MCF 10A (cell line): ENCODE measurements at regions of chr6 and their contacts with region 1.

Region 1: GRCh38 chr6:28252009-28252975 is at the start of gene ZKSCAN4:
- DNase-seq: peak; percentile 91
- H3K4me3 Mint-ChIP-seq: peak within 1 kb of the TSS; percentile 93
- H3K27ac Mint-ChIP-seq: peak within 1 kb of the TSS; percentile 83
- H3K4me1 Mint-ChIP-seq: peaks cover 7% of the 10 kb centered on the region
- H3K27me3 Mint-ChIP-seq: no peaks in the 10 kb centered on the region
- CTCF ChIP-seq: no peak
- total RNA-seq, gene ZKSCAN4: 3.3 and 4.8 TPM in 2 replicates

Region 2: DNA sequence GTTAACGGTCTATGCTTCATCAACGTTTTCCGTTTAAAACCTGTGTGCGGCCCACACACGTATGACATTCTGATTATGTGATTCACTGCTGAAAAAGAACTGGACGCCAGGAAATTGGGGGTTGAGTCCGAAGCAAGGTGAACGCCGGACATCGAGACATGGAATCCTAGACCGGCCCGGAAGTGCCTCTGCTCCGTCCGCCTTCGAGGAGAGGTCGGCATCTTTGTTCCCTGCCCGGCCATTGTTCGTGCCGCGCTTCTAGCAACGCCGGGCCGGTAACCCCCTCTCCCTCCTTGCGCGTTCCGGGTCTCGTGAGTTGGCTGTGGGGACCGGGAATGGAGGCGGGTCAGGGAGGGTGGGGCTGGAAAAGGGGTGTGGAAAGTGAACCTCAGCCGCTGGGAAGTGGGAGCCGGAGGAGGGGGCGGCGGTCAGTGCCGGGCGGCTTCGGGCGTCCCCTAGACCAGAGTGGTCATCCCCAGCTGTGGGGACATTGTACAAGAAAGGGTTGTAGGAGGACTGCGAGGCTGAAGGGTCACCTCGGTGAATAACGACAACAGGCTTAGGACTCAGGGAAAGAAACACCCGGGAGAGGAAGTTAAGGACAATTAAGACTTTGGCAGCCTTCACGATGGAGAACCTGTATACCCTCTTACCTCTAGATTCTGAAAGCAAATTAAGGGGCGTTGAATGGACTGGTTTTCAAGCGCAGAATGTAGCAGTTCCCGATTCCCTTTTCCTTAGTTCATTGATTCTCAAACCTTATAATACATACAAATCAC is 27.0 kb before region 1 on chr6 and contains the start of gene ZSCAN9:
- CTCF ChIA-PET with region 1: no interaction called
- POLR2A ChIA-PET with region 1: interaction called, 10 read pairs
- intact Hi-C with region 1: loop called (anchors 1 kb)
- DNase-seq: peak; percentile 93
- H3K4me3 Mint-ChIP-seq: peak within 1 kb of the TSS; percentile 94
- H3K27ac Mint-ChIP-seq: peak within 1 kb of the TSS; percentile 97
- H3K4me1 Mint-ChIP-seq: peaks cover 16% of the 10 kb centered on the region
- H3K27me3 Mint-ChIP-seq: no peaks in the 10 kb centered on the region
- CTCF ChIP-seq: no peak
- total RNA-seq, gene ZSCAN9: 13.7 and 15.6 TPM in 2 replicates

Region 3: DNA sequence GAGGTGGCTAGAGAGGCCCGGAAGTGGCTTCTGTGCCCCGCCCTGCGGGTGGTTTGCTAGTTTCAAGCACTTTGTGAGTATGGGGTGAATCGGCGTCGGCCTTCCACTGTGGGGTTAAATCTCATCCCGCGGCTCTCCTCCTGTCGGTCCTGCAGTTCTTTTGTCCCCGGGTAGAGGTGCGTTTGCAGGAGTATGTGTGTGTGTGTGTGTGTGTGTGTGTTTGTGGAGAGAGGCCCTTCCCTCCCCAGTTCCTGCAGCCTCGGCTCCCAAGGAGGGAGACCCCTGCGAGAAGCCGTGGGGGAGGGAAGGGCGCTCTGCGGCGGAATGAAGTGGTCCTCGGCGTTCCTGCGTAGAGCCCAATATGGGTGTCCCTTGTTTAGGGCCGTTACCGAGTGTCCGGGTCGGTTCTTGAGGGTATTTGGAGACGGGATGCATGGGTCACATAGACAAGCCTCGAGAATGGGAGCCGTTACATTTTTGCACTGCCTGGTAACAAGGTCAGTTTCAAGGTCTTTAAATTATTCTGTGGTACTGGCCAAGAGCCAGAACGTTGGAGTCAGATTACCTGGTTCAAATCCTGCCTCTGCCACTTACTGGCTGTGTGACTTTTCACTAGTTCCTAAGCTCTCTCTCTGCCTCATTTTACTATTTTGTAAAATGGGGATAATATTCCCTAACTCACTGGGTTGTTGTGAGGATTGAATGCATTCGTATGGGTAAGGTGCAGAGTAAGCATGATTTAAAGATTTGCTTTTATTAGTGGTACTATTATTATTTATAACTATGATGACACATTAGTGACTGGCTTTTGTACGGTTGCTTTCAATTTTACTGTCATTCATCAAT is 97.8 kb after region 1 on chr6 and contains the start of gene ZKSCAN3:
- CTCF ChIA-PET with region 1: interaction called, 8 read pairs
- POLR2A ChIA-PET with region 1: interaction called, 22 read pairs
- intact Hi-C with region 1: loop called (anchors 1 kb)
- DNase-seq: peak; percentile 82
- H3K4me3 Mint-ChIP-seq: peak within 1 kb of the TSS; percentile 99
- H3K27ac Mint-ChIP-seq: peak within 1 kb of the TSS; percentile 93
- H3K4me1 Mint-ChIP-seq: peaks cover 12% of the 10 kb centered on the region
- H3K27me3 Mint-ChIP-seq: peaks cover 20% of the 10 kb centered on the region
- CTCF ChIP-seq: no peak
- total RNA-seq, gene ZKSCAN3: 2.7 and 3.7 TPM in 2 replicates